Right cardiac atrium (tissue), 5 donors: ENCODE measurements at regions of chr10 and their contacts with region 1.

Region 1: GRCh38 chr10:71396084-71396720 is 518 bp upstream of the CDH23 start:
- DNase-seq: peak; percentile 60 to 88 (median 82)
- ATAC-seq: peak; percentile 88 to 93
- H3K4me3 ChIP-seq: peak overlapping the region; percentile 63
- H3K27ac ChIP-seq: no peak overlapping the region
- H3K4me1 ChIP-seq: peaks cover 5% of the 10 kb centered on the region
- H3K27me3 ChIP-seq: no peaks in the 10 kb centered on the region

Region 2: DNA sequence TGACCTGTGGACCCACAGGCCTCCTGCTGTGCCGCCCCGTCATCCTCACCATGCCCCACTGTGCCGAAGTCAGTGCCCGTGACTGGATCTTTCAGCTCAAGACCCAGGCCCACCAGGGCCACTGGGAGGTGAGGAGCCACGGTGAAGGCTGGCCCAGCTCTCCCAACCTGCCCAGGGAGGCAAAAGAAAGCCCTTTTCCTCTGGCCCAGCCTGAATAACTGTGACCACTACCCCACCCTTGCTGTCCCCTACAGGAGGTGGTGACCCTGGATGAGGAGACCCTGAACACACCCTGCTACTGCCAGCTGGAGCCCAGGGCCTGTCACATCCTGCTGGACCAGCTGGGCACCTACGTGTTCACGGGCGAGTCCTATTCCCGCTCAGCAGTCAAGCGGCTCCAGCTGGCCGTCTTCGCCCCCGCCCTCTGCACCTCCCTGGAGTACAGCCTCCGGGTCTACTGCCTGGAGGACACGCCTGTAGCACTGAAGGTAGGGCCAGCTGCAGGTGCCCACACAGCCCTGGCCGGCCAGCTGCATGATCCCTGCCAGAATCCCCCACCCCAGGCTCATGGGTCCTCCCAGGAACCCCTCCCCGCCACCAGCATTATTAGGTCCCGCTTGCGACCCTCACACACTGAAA is 102.6 kb before region 1 on chr10:
- intact Hi-C with region 1: no loop called
- DNase-seq: peak in 2 of 3 donors; percentile 33 to 66
- ATAC-seq: no peak
- H3K4me3 ChIP-seq: no peak overlapping the region
- H3K27ac ChIP-seq: no peak overlapping the region
- H3K4me1 ChIP-seq: no peaks in the 10 kb centered on the region
- H3K27me3 ChIP-seq: no peaks in the 10 kb centered on the region

Region 3: GRCh38 chr10:71431239-71432100 is 35.3 kb after region 1 on chr10:
- intact Hi-C with region 1: no loop called
- DNase-seq: peak in 1 of 3 donors; percentile 69
- ATAC-seq: peak; percentile 35 to 52
- H3K4me3 ChIP-seq: no peak overlapping the region
- H3K27ac ChIP-seq: no peak overlapping the region
- H3K4me1 ChIP-seq: peaks cover 9% of the 10 kb centered on the region
- H3K27me3 ChIP-seq: no peaks in the 10 kb centered on the region

Region 4: DNA sequence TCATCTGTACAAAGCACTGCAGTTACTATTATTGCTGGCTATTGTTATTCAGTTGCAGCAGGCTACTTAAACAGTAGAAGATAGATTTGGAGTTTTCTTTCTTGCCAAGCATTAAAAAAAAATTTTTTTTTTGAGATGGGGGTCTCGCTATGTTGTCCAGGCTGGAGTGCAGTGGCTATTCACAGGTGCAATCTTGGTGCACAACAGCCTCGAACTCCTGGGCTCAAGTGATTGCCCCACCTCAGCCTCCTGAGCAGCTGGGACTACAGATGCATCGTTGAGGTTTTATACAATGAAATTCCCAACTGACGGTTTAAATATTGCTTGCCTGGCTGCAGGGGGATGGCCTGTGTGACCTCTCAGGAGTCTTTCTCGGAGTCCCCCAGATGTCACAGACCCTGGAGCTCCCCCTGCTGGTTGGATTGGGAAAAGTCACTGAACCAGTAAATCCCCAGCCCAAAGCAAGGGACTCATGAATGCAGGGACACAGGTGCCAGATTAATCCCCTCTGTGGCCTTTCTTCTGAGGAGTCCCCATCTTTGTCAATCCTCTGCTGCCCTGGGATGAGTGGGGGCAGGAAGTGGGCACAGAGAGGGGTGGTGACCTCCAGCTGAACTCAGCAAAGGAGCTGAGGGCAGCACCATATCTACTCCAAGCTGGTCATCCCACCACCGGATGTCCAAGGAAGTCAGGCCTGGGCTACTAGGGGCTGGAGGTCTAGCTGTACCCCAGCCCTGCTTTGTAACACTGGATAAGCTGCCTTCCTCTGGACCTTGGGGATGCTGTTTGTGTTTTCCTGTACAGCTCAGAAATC is 173.8 kb after region 1 on chr10:
- intact Hi-C with region 1: loop called (anchors 2 to 10 kb)
- DNase-seq: peak; percentile 65 to 87 (median 77)
- ATAC-seq: peak; percentile 37 to 64
- H3K4me3 ChIP-seq: no peak overlapping the region
- H3K27ac ChIP-seq: no peak overlapping the region
- H3K4me1 ChIP-seq: no peaks in the 10 kb centered on the region
- H3K27me3 ChIP-seq: no peaks in the 10 kb centered on the region

Region 5: DNA sequence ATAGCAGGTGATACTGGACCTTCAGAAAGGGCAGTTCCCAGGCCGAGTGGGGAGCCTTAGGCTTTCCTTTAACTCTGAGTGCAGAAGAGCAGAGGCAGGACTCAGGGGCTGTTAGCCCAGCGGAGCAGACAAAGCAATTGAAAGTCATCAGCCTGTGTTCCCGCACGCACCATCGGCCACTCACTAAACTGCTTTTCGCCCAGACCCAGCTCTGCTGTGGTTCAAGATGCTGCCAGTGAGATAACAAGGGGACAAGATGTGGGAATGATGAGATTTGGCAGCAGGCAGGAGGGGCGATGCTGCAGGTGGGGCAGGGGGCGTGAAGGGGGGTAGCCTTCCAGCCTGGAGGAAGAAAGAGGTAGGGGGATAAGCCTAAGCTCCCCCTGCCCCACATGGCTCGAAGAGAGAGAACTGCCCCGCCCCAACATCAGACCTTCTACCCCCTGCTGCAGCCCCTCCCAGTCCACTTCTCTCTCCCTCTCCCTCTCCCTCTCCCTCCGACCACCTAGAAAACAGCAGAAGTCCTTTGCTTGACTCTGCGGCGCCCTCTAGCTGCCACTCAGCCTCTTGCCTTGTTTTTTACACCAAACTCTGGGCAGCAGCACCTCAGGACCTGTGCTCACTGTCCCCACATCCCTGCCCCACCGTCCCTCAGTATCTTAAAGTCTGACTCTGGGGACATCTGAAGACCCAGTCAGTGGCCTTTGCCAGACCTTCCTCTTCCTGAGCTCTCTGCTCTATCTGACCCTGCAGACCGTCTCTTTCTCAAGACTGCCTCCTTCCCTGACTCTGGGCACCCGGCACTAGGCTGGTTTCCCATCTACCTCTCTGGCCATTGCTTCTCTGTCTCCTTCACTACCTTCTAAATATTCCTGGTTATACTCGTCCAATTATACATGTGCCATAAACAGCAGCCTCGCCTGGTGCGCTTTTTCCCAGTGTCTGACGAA is 212.9 kb after region 1 on chr10:
- intact Hi-C with region 1: loop called in 1 of 4 experiments (anchors 2 kb)
- DNase-seq: peak; percentile 82 to 94 (median 92)
- ATAC-seq: peak; percentile 22 to 45
- H3K4me3 ChIP-seq: no peak overlapping the region
- H3K27ac ChIP-seq: no peak overlapping the region
- H3K4me1 ChIP-seq: peaks cover 7% of the 10 kb centered on the region
- H3K27me3 ChIP-seq: no peaks in the 10 kb centered on the region

Region 6: DNA sequence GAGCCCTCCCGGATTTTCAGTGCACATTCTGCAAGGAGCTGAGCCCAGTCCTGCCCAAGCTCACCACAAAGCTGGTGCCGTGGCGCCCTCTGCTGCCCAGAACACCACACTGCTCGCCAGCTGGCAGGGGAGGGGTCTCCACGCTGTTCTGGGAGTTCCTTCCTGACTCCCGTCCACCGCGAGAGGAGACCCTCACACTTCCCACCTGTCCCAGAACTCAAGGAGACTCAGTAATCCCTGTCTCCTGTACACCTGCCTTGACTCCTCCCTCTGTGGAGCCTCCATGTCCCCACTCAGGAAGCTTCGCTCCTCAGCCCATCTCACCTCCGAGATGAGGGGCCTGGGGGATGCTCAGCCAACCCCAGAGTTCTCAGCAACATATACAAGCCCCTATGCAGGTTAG is 312.1 kb after region 1 on chr10:
- intact Hi-C with region 1: loop called in 2 of 4 experiments (anchors 5 kb)
- DNase-seq: peak; percentile 65 to 88 (median 88)
- ATAC-seq: peak; percentile 7 to 37
- H3K4me3 ChIP-seq: no peak overlapping the region
- H3K27ac ChIP-seq: no peak overlapping the region
- H3K4me1 ChIP-seq: peaks cover 5% of the 10 kb centered on the region
- H3K27me3 ChIP-seq: no peaks in the 10 kb centered on the region

Region 7: DNA sequence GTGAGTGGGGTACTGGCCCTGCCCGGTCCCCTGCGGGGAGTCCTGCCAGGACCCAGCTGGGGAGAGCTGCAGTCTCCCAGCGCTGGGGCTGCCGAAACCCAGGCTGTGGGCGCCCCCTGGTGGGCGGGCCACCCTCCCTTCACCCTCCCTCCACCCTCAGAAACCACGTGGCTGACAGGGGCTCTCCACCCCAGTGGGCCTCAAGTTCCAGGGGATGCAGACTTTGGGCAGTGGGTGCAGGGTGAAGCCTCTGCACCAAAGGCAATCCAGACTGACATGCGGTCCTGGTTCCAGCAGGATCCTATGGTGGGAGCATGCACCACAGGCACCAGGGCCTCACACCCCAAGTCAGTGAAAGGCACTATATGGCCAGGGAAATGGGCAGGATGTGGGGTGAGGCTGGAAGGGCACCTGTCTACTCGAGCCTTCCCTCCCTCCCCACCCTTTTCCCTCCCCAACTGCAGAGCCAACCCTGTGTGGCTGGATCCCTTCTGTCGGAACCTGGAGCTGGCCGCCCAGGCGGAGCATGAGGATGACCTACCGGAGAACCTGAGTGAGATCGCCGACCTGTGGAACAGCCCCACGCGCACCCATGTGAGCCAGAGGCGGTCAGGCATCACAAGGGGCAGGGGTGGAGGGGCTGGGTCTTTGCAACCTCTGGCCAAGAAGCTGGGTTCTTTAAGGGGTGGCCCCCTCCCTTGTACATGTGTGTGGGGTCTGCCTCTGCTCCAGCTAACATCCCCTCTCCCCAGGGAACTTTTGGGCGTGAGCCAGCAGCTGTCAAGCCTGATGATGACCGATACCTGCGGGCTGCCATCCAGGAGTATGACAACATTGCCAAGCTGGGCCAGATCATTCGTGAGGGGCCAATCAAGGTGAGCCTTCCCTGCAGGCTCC is 416.1 kb after region 1 on chr10:
- intact Hi-C with region 1: loop called in 1 of 4 experiments (anchors 10 kb)
- DNase-seq: peak; percentile 71 to 90 (median 89)
- ATAC-seq: peak; percentile 72 to 81
- H3K4me3 ChIP-seq: no peak overlapping the region
- H3K27ac ChIP-seq: no peak overlapping the region
- H3K4me1 ChIP-seq: peaks cover 2% of the 10 kb centered on the region
- H3K27me3 ChIP-seq: no peaks in the 10 kb centered on the region